GM10248 (cell line): ENCODE measurements at regions of chr9 and their contacts with region 1.

Region 1: GRCh38 chr9:77789891-77790290 is 141.8 kb upstream of the GNA14 start:
- DNase-seq: no peak
- CTCF ChIP-seq: no peak

Region 2: GRCh38 chr9:77632652-77633051 is 157.2 kb before region 1 on chr9:
- CTCF ChIA-PET with region 1: no interaction called
- POLR2A ChIA-PET with region 1: no interaction called
- DNase-seq: no peak
- CTCF ChIP-seq: no peak

Region 3: GRCh38 chr9:77802515-77803293 is 12.8 kb after region 1 on chr9:
- CTCF ChIA-PET with region 1: interaction called, 12 read pairs
- POLR2A ChIA-PET with region 1: no interaction called
- DNase-seq: no peak
- CTCF ChIP-seq: no peak

Region 4: GRCh38 chr9:77827104-77827784 is 37.4 kb after region 1 on chr9:
- CTCF ChIA-PET with region 1: no interaction called
- POLR2A ChIA-PET with region 1: no interaction called
- DNase-seq: peak; percentile 15
- CTCF ChIP-seq: no peak